HepG2 (cell line): ENCODE measurements at regions of chr5 and their contacts with region 1.

Region 1: GRCh38 chr5:140157032-140157803 is 17.8 kb upstream of the CYSTM1 start:
- DNase-seq: peak; percentile 91
- ATAC-seq: peak; percentile 96
- H3K4me3 ChIP-seq: peak overlapping the region; percentile 42 to 52 (median 44); a peak in 5 of 6 replicates
- H3K27ac ChIP-seq: peak overlapping the region; percentile 47
- H3K4me1 ChIP-seq: peaks cover 14% of the 10 kb centered on the region
- H3K27me3 ChIP-seq: no peaks in the 10 kb centered on the region
- CTCF ChIP-seq: peak; percentile 95
- EP300 ChIP-seq: peak in 1 of 2 experiments; percentile 24; a peak in 1 of 4 replicates
- POLR2A ChIP-seq: no peak
- RAD21 ChIP-seq: peak; percentile 92

Region 2: DNA sequence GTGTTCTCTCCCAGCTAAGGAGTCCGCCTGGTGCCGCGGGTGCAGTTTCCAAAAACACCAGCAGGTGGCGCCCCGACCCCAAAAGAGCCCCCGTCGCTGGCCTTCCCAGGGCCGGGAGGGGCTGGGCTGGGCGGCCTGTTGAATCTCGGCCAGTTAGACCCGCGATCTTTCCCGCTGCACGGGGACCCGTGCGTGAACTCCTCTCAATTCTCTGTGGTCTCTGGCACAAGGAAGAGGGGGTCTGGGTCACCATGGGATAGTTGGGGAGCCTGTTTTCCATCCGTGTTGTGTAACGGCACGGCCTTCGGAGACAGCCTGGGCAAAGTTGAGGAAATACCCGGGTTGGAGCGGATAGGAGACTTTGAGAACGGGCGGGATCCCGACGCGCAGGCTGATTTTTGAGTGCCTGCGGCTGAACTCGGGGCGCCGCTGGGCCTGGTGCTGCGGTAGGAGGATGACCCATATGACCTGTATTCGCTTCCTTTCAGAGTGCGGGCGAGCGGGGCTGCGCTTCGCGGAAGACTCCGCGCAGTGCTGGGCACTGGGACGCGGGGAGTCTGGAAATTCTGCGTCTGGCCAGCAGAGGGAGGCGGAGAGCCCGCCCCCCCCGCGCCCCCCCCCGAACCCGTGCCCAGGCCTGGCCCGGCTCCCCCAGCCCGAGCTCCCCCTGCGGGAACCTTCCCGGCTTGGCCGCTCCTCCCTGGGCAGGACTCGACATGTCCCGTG is 369.5 kb before region 1 on chr5:
- CTCF ChIA-PET with region 1: interaction called, 9 read pairs
- POLR2A ChIA-PET with region 1: no interaction called
- in situ Hi-C with region 1: no loop called
- intact Hi-C with region 1: loop called (anchors 5 kb)
- DNase-seq: peak; percentile 66
- ATAC-seq: peak; percentile 84
- H3K4me3 ChIP-seq: peak overlapping the region; percentile 59 to 84 (median 68)
- H3K27ac ChIP-seq: no peak overlapping the region
- H3K4me1 ChIP-seq: peaks cover 14% of the 10 kb centered on the region
- H3K27me3 ChIP-seq: peaks cover 4 to 34% of the 10 kb centered on the region in 2 experiments; a peak in 4 of 5 replicates
- CTCF ChIP-seq: peak; percentile 95
- EP300 ChIP-seq: no peak
- POLR2A ChIP-seq: no peak
- RAD21 ChIP-seq: peak; percentile 97

Region 3: DNA sequence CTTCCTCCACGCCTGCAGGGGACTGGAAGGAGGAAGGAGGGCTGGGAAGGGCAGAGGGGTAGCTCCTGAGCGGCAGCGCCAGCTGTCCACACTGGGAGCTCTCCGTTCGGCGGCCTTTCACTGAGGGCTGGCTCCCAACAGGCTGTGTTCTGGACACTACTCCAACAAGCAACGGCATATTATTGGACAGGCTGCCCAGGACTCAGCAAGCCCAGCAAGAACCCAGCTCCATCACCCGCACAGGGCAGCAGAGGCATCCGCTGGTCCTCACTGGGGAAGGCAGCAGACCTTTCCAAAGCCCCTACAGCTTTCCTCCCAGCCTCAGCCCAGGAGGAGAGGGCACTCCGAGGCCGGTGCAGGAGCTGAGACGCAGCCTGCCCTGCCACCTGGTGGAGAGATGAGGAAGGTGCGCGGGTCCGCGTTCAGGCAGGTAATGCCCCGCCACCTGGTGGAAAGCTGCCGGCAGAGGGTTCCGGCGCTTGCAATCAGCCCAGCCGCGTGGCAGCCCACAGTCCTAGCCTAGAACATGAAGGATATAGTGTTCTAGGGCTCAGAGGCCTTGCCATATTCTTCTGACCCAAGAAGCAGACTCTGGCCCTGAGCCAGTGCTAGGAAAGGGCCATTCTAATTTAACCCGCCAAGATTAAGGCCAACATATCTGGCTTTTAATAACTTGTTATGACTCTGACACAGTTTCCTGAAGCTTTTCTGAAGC is 188.5 kb before region 1 on chr5:
- CTCF ChIA-PET with region 1: interaction called, 6 read pairs
- POLR2A ChIA-PET with region 1: no interaction called
- in situ Hi-C with region 1: no loop called
- intact Hi-C with region 1: loop called (anchors 2 kb)
- DNase-seq: peak; percentile 62
- ATAC-seq: peak; percentile 99
- H3K4me3 ChIP-seq: peak overlapping the region in 1 of 3 experiments; percentile 33; a peak in 1 of 6 replicates
- H3K27ac ChIP-seq: no peak overlapping the region
- H3K4me1 ChIP-seq: no peaks in the 10 kb centered on the region
- H3K27me3 ChIP-seq: peaks cover 2 to 17% of the 10 kb centered on the region in 2 experiments; a peak in 3 of 5 replicates
- CTCF ChIP-seq: peak; percentile 100
- EP300 ChIP-seq: 0 out of 4 replicates have a peak, but pooled peaks of 1 of the 2 experiments have one; percentile 5
- POLR2A ChIP-seq: no peak
- RAD21 ChIP-seq: peak; percentile 97

Region 4: DNA sequence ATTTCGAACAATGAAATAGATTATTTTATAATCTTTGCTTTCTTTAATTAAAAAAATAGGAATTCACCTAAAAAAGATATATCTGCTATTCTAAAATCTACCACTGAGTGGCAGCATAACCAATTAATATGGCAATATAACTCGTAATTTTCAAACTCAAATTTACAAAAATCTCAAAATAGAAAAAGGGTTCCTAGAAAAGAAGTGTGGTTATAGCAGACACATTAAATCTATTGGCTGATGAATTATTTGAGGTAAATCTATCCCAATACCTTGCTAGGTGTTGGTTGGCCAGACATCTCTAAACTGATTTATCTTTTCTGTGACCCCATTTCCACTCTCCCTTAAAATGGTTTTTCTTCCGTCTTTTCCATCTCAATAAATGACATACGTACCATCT is 83.9 kb before region 1 on chr5:
- CTCF ChIA-PET with region 1: interaction called, 40 read pairs
- POLR2A ChIA-PET with region 1: no interaction called
- in situ Hi-C with region 1: loop called (anchors 5 kb)
- intact Hi-C with region 1: loop called (anchors 1 kb)
- DNase-seq: no peak
- ATAC-seq: no peak
- H3K4me3 ChIP-seq: no peak overlapping the region
- H3K27ac ChIP-seq: no peak overlapping the region
- H3K4me1 ChIP-seq: no peaks in the 10 kb centered on the region
- H3K27me3 ChIP-seq: no peaks in the 10 kb centered on the region
- CTCF ChIP-seq: peak; percentile 32; the same call in 1 of the 2 replicates
- EP300 ChIP-seq: no peak
- POLR2A ChIP-seq: no peak
- RAD21 ChIP-seq: no peak

Region 5: DNA sequence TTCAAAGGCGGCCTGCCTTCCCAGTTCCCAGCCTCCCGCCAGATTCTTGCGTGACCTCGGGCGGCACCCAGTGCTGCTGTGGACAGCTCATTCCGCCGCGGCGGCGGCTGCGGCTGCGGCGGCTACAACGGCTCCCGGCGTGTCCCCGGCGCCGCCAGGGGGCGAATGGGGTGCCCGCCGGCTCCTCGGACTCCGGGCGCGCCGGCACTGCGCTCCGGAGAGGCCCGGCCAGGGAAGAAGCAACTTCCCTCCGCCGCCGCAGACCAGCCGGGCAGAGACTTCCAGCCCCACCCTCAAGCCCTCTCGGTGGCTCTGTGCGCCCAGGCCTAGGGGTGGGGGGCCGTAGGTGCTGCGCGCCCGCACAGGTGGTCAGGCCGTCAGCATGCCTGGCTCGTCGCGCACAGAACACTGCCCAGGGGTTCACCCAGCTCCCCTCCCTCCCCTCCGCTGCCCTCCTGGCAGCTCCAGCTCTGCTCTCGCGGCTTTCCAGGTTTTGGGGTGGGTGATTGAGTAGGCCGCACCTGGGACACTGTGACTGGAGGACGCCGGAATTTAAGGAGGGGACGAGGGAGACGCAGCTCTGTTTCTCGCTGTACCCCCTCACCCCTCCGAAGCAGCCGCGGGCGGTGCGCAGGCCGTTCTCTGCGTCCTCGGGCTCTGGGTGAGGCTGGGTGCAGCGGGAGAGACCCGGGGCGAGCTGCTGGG is 11.2 kb before region 1 on chr5:
- CTCF ChIA-PET with region 1: interaction called, 20 read pairs
- POLR2A ChIA-PET with region 1: interaction called, 4 read pairs
- in situ Hi-C with region 1: no loop called
- intact Hi-C with region 1: loop called (anchors 1 kb)
- DNase-seq: peak; percentile 38
- ATAC-seq: peak; percentile 90
- H3K4me3 ChIP-seq: peak overlapping the region; percentile 49 to 69 (median 54); a peak in 4 of 6 replicates
- H3K27ac ChIP-seq: no peak overlapping the region
- H3K4me1 ChIP-seq: peaks cover 50% of the 10 kb centered on the region
- H3K27me3 ChIP-seq: peaks cover 1 to 5% of the 10 kb centered on the region in 2 experiments; a peak in 1 of 5 replicates
- CTCF ChIP-seq: peak; percentile 76
- EP300 ChIP-seq: no peak
- POLR2A ChIP-seq: no peak
- RAD21 ChIP-seq: peak; percentile 89

Region 6: DNA sequence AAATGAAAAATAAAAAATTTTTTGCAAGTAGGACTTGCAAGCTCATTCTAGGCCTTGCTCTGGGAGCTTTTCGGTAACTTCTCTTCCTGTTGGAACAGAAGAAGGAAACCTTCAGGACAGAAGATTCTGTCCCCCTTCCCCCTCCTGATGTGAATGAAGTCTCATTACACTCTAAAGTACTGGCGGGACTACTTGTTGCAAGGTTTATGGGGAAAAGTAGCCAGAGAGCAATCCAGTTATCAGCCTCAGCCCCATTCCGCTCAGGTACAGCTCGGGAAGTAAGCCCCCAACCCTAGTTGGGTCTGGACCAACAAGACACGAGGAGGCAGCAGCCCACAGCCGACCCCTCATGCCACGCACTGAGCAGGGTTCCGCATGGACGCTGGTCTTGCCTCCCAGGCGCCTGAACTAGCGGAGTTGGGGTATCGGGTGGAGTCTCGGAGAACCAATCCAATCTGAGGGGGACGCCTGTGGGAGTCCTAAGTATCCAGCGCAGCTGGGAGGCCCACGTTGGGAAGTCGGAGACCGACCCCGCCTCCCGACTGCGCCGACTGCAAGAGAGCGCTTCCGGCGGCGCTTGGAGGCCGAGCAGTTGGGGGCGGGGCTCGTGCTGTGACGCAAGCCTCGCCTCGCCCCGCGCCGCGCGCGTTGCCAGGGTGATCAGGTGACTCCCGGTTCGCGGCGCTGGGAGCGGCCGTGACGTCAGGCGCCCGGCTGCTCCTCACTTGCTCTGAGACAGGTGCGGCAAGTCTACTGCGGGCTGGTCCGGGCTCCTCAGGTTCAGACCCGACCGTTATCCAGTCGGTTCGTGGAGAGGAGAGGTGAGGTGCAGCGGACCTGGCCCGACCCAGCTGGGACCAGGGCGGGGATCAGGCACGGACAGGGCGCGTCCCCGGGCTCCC is 17.5 kb after region 1 on chr5 and contains the start of gene CYSTM1:
- CTCF ChIA-PET with region 1: no interaction called
- POLR2A ChIA-PET with region 1: interaction called, 8 read pairs
- in situ Hi-C with region 1: no loop called
- intact Hi-C with region 1: loop called (anchors 2 kb)
- DNase-seq: peak; percentile 89
- ATAC-seq: peak; percentile 84
- H3K4me3 ChIP-seq: peak within 1 kb of the TSS; percentile 84 to 96 (median 89)
- H3K27ac ChIP-seq: peak within 1 kb of the TSS; percentile 89
- H3K4me1 ChIP-seq: peaks cover 61% of the 10 kb centered on the region
- H3K27me3 ChIP-seq: no peaks in the 10 kb centered on the region; a peak in 1 of 5 replicates
- CTCF ChIP-seq: no peak
- EP300 ChIP-seq: no peak
- POLR2A ChIP-seq: peak; percentile 74 to 81; a peak in 3 of 4 replicates
- RAD21 ChIP-seq: 0 out of 2 replicates have a peak, but pooled peaks have one; percentile 15
- total RNA-seq, gene CYSTM1: 40.0 and 52.7 TPM in 2 replicates

Region 7: DNA sequence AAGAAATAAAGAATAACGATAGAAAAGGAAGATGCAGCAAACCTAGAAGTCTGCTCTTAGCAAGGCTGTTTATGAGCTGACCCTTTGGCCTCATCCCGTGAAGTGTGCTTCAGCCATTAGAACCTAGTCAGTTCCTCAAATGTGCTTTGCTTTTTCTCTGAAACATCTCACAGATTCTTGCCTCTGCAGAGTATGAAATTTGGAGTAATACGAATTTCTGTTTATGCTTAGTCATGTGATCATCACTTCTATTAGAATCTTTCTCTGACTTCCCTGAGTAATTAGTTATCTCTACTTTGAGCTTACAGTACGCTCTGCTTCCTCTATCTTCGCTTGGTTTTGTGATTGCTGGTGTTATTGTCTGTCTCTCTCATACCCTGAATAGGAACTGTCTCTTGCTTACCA is 29.1 kb after region 1 on chr5:
- CTCF ChIA-PET with region 1: no interaction called
- POLR2A ChIA-PET with region 1: no interaction called
- in situ Hi-C with region 1: no loop called
- intact Hi-C with region 1: no loop called
- DNase-seq: no peak
- ATAC-seq: no peak
- H3K4me3 ChIP-seq: no peak overlapping the region
- H3K27ac ChIP-seq: no peak overlapping the region
- H3K4me1 ChIP-seq: peaks cover 37% of the 10 kb centered on the region
- H3K27me3 ChIP-seq: no peaks in the 10 kb centered on the region
- CTCF ChIP-seq: no peak
- EP300 ChIP-seq: no peak
- POLR2A ChIP-seq: no peak
- RAD21 ChIP-seq: no peak